Keratinocyte (primary cell): ENCODE measurements at regions of chr14 and their contacts with region 1.

Region 1: GRCh38 chr14:21557084-21557901 is 22.6 kb downstream of the OR10G3 start:
- DNase-seq: peak; percentile 26
- H3K4me3 ChIP-seq: peak overlapping the region in 2 of 3 experiments; percentile 38 to 41
- H3K27ac ChIP-seq: no peak overlapping the region
- H3K4me1 ChIP-seq: peaks cover 5% of the 10 kb centered on the region
- H3K27me3 ChIP-seq: no peaks in the 10 kb centered on the region
- CTCF ChIP-seq: peak; percentile 27 to 56 (median 30)

Region 2: GRCh38 chr14:21308479-21309237 is 248.6 kb before region 1 on chr14:
- dilution Hi-C with region 1: no loop called
- DNase-seq: peak; percentile 38
- H3K4me3 ChIP-seq: peak overlapping the region; percentile 15 to 73 (median 67)
- H3K27ac ChIP-seq: peak overlapping the region; percentile 78
- H3K4me1 ChIP-seq: peaks cover 8% of the 10 kb centered on the region
- H3K27me3 ChIP-seq: no peaks in the 10 kb centered on the region
- CTCF ChIP-seq: no peak

Region 3: DNA sequence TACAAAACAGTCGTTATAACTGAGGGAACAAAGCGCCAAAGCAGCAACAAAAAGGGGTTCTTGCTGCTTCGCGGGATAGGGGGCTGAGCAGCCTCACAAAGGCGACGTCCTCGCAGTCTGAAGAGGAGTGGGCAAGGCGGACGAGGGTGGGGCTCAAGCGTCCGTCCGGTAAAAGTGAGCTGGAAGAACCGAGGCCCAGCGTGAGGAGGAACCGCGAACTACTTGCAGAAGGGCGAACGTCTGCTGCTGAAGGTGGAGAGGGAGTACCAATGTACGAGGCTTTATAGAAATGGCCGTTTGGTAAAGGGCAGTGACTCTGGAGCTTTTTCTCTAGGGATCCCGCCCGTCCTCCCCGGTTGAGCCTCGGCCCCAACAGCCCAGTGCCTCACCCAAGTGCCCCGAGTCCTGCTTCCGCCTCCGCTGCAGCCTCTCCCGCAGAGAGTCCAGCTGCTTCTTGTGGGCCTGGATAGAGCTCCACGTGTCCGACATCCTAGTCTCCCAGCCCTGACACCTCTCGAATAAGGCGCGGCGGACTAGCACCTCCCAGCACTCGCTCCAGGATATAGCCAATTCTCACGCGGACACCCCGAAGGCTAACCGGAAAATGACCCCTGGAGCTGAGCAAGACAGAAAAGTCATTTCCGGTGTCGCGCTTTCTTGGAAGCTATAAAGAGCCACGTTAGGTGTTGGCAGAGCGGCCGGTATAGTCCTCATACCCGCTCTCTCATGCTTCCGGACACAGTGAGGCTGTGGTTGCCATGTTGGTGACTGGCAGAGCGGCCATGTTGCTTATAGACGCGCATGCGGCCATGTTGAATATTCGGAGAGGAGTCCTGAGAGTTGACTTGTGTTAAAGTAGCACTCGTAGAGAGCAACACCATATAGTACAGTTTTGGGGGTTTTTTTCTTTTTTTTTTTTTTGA is 46.3 kb before region 1 on chr14 and contains the start of gene METTL3:
- dilution Hi-C with region 1: loop called (anchors 5 kb)
- DNase-seq: peak; percentile 89
- H3K4me3 ChIP-seq: peak within 1 kb of the TSS; percentile 94 to 97 (median 97)
- H3K27ac ChIP-seq: peak within 1 kb of the TSS; percentile 85
- H3K4me1 ChIP-seq: peaks cover 11% of the 10 kb centered on the region
- H3K27me3 ChIP-seq: no peaks in the 10 kb centered on the region
- CTCF ChIP-seq: no peak
- polyA plus RNA-seq, gene METTL3: 66.5 to 99.7 TPM (median 96.0 TPM) in 3 replicates